Panc1 (cell line): ENCODE measurements at regions of chr19 and their contacts with region 1.

Region 1: GRCh38 chr19:4139614-4140236 is 13.7 kb upstream of the CREB3L3 start:
- DNase-seq: peak; percentile 52
- ATAC-seq: peak; percentile 90
- H3K4me3 ChIP-seq: peak overlapping the region in 1 of 2 experiments; percentile 37; a peak in 2 of 4 replicates
- H3K27ac ChIP-seq: no peak overlapping the region
- H3K4me1 ChIP-seq: no peaks in the 10 kb centered on the region
- H3K27me3 ChIP-seq: no peaks in the 10 kb centered on the region
- CTCF ChIP-seq: peak; percentile 84

Region 2: DNA sequence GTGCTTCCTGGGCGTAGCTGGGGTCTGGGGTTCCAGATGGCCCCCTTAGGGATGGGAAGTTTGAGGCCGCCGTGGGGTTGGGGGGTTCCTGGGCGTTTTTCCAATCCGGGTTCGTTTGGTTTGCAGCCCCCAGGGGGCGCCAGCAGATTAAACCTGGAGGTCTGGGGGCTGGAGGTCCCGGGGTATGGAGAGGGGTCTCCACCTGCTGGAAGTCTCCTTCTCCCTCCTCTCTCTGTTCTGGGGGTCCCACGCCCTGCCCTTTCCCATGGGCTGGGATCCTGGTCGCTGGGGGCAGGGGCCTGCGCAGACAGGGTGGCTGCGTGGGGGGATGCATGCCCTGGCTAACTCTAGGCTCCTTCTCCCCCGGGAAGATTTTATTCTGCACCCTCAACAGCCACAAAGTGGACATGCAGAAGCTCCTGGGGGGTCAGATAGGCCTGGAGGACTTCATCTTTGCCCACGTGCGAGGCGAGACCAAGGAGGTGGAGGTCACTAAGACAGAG is 553.5 kb before region 1 on chr19:
- CTCF ChIA-PET with region 1: no interaction called
- POLR2A ChIA-PET with region 1: no interaction called
- in situ Hi-C with region 1: no loop called
- intact Hi-C with region 1: no loop called
- DNase-seq: no peak
- ATAC-seq: peak; percentile 32; the same call in 1 of the 2 replicates
- H3K4me3 ChIP-seq: peak overlapping the region; percentile 22 to 37
- H3K27ac ChIP-seq: no peak overlapping the region
- H3K4me1 ChIP-seq: no peaks in the 10 kb centered on the region
- H3K27me3 ChIP-seq: no peaks in the 10 kb centered on the region
- CTCF ChIP-seq: peak; percentile 83

Region 3: GRCh38 chr19:4108767-4109625 is 30.7 kb before region 1 on chr19:
- CTCF ChIA-PET with region 1: interaction called, 10 read pairs
- POLR2A ChIA-PET with region 1: no interaction called
- in situ Hi-C with region 1: no loop called
- intact Hi-C with region 1: no loop called
- DNase-seq: no peak
- ATAC-seq: no peak
- H3K4me3 ChIP-seq: no peak overlapping the region
- H3K27ac ChIP-seq: no peak overlapping the region
- H3K4me1 ChIP-seq: no peaks in the 10 kb centered on the region
- H3K27me3 ChIP-seq: no peaks in the 10 kb centered on the region
- CTCF ChIP-seq: no peak

Region 4: GRCh38 chr19:4208385-4209094 is 68.8 kb after region 1 on chr19:
- CTCF ChIA-PET with region 1: no interaction called
- POLR2A ChIA-PET with region 1: no interaction called
- in situ Hi-C with region 1: no loop called
- intact Hi-C with region 1: loop called (anchors 10 kb)
- DNase-seq: no peak
- ATAC-seq: peak; percentile 43; the same call in 1 of the 2 replicates
- H3K4me3 ChIP-seq: no peak overlapping the region
- H3K27ac ChIP-seq: no peak overlapping the region
- H3K4me1 ChIP-seq: no peaks in the 10 kb centered on the region
- H3K27me3 ChIP-seq: no peaks in the 10 kb centered on the region
- CTCF ChIP-seq: peak; percentile 62; the same call in 1 of the 2 replicates

Region 5: GRCh38 chr19:4232958-4233853 is 93.5 kb after region 1 on chr19:
- CTCF ChIA-PET with region 1: no interaction called
- POLR2A ChIA-PET with region 1: no interaction called
- in situ Hi-C with region 1: no loop called
- intact Hi-C with region 1: no loop called
- DNase-seq: peak; percentile 33
- ATAC-seq: peak; percentile 75
- H3K4me3 ChIP-seq: peak overlapping the region in 1 of 2 experiments; percentile 9; a peak in 1 of 4 replicates
- H3K27ac ChIP-seq: no peak overlapping the region
- H3K4me1 ChIP-seq: no peaks in the 10 kb centered on the region; the same call in 1 of the 2 replicates
- H3K27me3 ChIP-seq: no peaks in the 10 kb centered on the region; the same call in 1 of the 2 replicates
- CTCF ChIP-seq: peak; percentile 90